CD4-positive, alpha-beta memory T cell (primary cell): ENCODE measurements at regions of chr1 and their contacts with region 1.

Region 1: DNA sequence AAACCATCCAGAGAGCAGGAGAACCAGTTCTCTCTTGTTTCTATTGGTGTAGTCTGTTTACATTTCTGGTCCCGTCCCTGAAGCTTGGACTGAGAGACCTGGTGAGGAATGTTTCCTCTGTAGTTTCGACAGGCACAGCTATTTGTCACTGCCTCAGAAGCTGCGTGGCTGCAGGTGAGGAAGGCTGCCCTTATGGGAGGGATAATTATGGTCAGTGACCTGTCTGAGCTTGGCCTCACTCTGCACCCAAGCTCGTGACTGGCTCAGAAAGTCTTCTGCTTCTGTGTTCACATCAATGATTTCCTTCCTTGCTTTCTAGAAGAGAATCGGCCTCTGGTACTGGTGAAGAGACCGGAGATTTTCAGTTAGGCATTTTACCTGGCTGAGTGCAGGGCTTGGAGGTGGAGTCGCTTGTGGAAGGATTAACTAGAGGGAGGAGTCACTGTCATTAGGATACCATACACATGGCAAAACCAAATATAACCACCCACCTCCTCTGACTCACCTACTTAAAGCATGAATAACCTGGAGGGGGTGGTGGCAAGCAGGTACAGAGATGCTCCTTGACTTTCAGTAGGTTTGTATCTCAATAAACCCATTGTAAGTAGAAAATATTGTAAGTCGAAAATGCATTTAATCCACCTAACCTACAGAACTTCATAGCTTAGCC is 19.9 kb upstream of the WDR26 start:
- DNase-seq: no peak
- H3K4me3 ChIP-seq: no peak overlapping the region
- H3K4me3 Mint-ChIP-seq: no peak overlapping the region
- H3K27ac ChIP-seq: no peak overlapping the region
- H3K27ac Mint-ChIP-seq: peak overlapping the region in 4 of 7 donors; percentile 14 to 74 (median 60)
- H3K4me1 ChIP-seq: peaks cover 14% of the 10 kb centered on the region
- H3K4me1 Mint-ChIP-seq: peaks cover 10 to 24% (median 17%) of the 10 kb centered on the region in 4 donors
- H3K27me3 ChIP-seq: no peaks in the 10 kb centered on the region
- H3K27me3 Mint-ChIP-seq: no peaks in the 10 kb centered on the region

Region 2: DNA sequence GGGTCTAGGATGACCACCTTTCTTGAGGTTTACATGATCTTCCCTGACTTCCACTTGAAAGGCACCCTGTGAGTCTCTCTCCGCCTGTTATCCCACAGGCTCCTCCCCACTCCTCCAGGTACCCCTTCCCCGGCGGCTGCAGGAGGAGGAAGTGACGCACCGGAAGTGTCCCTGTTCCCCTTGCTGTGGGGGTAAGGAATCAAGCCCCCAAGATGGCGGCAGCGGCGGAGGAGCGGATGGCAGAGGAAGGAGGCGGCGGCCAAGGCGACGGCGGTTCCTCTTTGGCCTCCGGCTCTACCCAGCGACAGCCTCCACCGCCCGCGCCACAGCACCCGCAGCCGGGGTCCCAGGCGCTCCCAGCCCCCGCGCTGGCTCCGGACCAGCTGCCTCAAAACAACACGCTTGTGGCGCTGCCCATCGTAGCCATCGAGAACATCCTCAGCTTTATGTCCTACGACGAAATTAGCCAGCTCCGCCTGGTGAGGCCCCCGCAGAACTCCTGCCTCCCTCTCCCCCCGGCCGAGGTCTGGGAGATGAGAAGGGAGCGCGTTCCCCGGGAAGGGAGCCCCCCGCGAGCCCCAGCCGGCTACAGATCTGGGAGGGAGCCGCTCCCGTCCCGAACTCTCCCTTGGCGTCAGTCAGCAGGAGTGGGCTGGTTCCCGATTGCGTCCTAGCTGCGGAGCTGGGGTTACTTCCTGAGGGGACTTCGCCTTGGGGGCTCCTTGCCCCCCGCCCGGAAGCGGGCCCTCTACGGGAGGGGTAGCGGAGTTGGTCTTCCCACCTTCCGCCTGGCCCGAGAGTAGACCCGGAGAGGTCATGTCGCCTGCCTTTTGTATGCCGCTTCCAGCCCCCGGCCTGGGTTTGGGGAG is 340.4 kb before region 1 on chr1 and contains the start of gene FBXO28:
- CTCF ChIA-PET with region 1: interaction called, 41 read pairs
- POLR2A ChIA-PET with region 1: interaction called, 5 read pairs
- intact Hi-C with region 1: loop called (anchors 1 kb)
- DNase-seq: peak; percentile 87 to 95 (median 89)
- H3K4me3 ChIP-seq: peak within 1 kb of the TSS; percentile 53 to 54
- H3K4me3 Mint-ChIP-seq: peak within 1 kb of the TSS; percentile 87 to 97 (median 94)
- H3K27ac ChIP-seq: peak within 1 kb of the TSS; percentile 97
- H3K27ac Mint-ChIP-seq: peak within 1 kb of the TSS; percentile 84 to 97 (median 95)
- H3K4me1 ChIP-seq: peaks cover 32% of the 10 kb centered on the region
- H3K4me1 Mint-ChIP-seq: peaks cover 17 to 32% (median 24%) of the 10 kb centered on the region in 4 donors
- H3K27me3 ChIP-seq: no peaks in the 10 kb centered on the region
- H3K27me3 Mint-ChIP-seq: peaks cover 0 to 2% of the 10 kb centered on the region in 2 donors
- total RNA-seq, gene FBXO28: 36.4 to 39.7 TPM

Region 3: GRCh38 chr1:224377676-224378006 is 76.9 kb before region 1 on chr1:
- CTCF ChIA-PET with region 1: interaction called, 20 read pairs
- POLR2A ChIA-PET with region 1: interaction called, 3 read pairs
- intact Hi-C with region 1: no loop called
- DNase-seq: no peak
- H3K4me3 ChIP-seq: no peak overlapping the region
- H3K4me3 Mint-ChIP-seq: peak overlapping the region in 7 of 8 donors; percentile 39 to 83 (median 72)
- H3K27ac ChIP-seq: no peak overlapping the region
- H3K27ac Mint-ChIP-seq: peak overlapping the region; percentile 52 to 96 (median 87)
- H3K4me1 ChIP-seq: peaks cover 97% of the 10 kb centered on the region
- H3K4me1 Mint-ChIP-seq: peaks cover 66 to 97% (median 86%) of the 10 kb centered on the region in 4 donors
- H3K27me3 ChIP-seq: no peaks in the 10 kb centered on the region
- H3K27me3 Mint-ChIP-seq: no peaks in the 10 kb centered on the region

Region 4: DNA sequence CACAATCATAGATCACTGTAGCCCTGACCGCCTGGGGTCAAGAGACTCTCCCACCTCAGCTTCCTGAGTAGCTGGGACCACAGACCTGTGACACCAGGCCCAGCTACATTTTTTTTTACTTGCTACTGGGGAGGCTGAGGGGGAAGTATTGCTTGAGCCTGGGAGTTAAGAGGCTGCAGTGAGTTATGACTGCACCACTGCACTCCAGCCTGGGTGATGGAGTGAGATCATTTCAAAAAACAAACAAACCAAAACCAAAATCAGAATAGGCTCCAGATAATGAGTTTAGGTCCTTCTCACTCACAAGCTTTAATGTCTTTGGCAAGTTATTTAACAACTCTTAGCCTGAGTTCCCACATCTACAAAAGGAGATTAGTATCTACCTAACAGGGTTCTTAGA is 42.8 kb before region 1 on chr1:
- CTCF ChIA-PET with region 1: interaction called, 15 read pairs
- POLR2A ChIA-PET with region 1: interaction called, 3 read pairs
- intact Hi-C with region 1: no loop called
- DNase-seq: no peak
- H3K4me3 ChIP-seq: no peak overlapping the region
- H3K4me3 Mint-ChIP-seq: no peak overlapping the region
- H3K27ac ChIP-seq: no peak overlapping the region
- H3K27ac Mint-ChIP-seq: peak overlapping the region in 3 of 7 donors; percentile 21 to 73 (median 70)
- H3K4me1 ChIP-seq: peaks cover 9% of the 10 kb centered on the region
- H3K4me1 Mint-ChIP-seq: peaks cover 16 to 34% (median 24%) of the 10 kb centered on the region in 4 donors
- H3K27me3 ChIP-seq: no peaks in the 10 kb centered on the region
- H3K27me3 Mint-ChIP-seq: no peaks in the 10 kb centered on the region

Region 5: DNA sequence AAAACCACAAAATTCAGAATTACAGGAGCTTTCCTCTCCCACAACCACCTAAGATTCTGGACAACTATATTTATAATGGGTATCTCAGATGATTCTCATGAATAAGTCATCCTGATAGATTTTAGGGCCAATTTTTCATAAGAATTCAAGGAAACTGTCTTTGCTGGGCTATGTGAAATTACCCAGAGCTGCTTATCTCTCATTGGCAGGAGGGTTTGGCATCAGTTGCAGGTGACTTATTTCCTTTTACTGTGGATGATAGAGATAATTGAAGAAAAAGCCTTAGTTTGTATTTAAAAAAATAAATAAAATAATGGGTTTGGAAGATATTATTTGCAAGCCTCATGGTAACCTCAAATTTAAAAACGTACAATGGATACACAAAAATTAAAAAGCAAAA is 18.3 kb after region 1 on chr1:
- CTCF ChIA-PET with region 1: interaction called, 12 read pairs
- POLR2A ChIA-PET with region 1: no interaction called
- intact Hi-C with region 1: no loop called
- DNase-seq: no peak
- H3K4me3 ChIP-seq: no peak overlapping the region
- H3K4me3 Mint-ChIP-seq: no peak overlapping the region
- H3K27ac ChIP-seq: no peak overlapping the region
- H3K27ac Mint-ChIP-seq: no peak overlapping the region
- H3K4me1 ChIP-seq: no peaks in the 10 kb centered on the region
- H3K4me1 Mint-ChIP-seq: no peaks in the 10 kb centered on the region
- H3K27me3 ChIP-seq: no peaks in the 10 kb centered on the region
- H3K27me3 Mint-ChIP-seq: peaks cover 0 to 1% of the 10 kb centered on the region in 2 donors

Region 6: DNA sequence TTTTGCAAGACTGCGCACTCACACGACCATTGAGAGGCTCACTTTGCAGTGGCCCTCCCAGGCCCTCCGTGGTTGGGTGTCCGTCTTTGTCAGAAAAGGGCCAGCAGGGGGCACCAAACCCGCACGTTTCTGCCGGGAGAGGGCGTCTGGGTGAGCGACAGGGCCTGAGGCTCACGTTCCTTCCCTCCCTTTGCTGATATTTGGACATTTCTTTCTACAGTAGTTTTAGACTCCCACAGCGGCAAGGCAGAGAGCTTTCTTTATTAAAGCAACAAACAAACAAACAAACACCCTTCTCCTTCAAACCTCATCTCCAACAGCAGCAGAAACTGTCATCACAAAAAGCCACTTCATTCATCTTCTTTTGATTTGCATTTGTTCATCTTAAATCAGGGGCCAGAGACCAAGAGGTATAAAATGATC is 59.3 kb after region 1 on chr1:
- CTCF ChIA-PET with region 1: no interaction called
- POLR2A ChIA-PET with region 1: no interaction called
- intact Hi-C with region 1: no loop called
- DNase-seq: peak; percentile 71 to 79 (median 73)
- H3K4me3 ChIP-seq: no peak overlapping the region
- H3K4me3 Mint-ChIP-seq: no peak overlapping the region
- H3K27ac ChIP-seq: no peak overlapping the region
- H3K27ac Mint-ChIP-seq: peak overlapping the region in 5 of 7 donors; percentile 10 to 44 (median 31)
- H3K4me1 ChIP-seq: no peaks in the 10 kb centered on the region
- H3K4me1 Mint-ChIP-seq: peaks cover 5 to 7% (median 7%) of the 10 kb centered on the region in 4 donors
- H3K27me3 ChIP-seq: no peaks in the 10 kb centered on the region
- H3K27me3 Mint-ChIP-seq: no peaks in the 10 kb centered on the region